K562 (cell line): ENCODE measurements at regions of chr2 and their contacts with region 1.

Region 1: GRCh38 chr2:70994756-70995729 is at the start of gene TEX261:
- DNase-seq: peak; percentile 91 to 92 (median 91)
- ATAC-seq: peak; percentile 98
- H3K4me3 ChIP-seq: peak within 1 kb of the TSS; percentile 87
- H3K27ac ChIP-seq: peak within 1 kb of the TSS; percentile 65
- H3K4me1 ChIP-seq: peaks cover 12 to 22% of the 10 kb centered on the region in 2 experiments; a peak in 4 of 5 replicates
- H3K27me3 ChIP-seq: no peaks in the 10 kb centered on the region
- CTCF ChIP-seq: peak; percentile 61 to 94 (median 87)
- EP300 ChIP-seq: 0 out of 2 replicates have a peak, but pooled peaks have one; percentile 6
- POLR2A ChIP-seq: 0 out of 2 replicates have a peak, but pooled peaks have one; percentile 35
- RAD21 ChIP-seq: peak in 1 of 2 experiments; percentile 28; a peak in 2 of 4 replicates
- polyA plus RNA-seq, gene TEX261: 11.9 to 16.7 TPM

Region 2: GRCh38 chr2:70627211-70627902 is 367.7 kb before region 1 on chr2:
- CTCF ChIA-PET with region 1: no interaction called
- POLR2A ChIA-PET with region 1: no interaction called
- in situ Hi-C with region 1: no loop called
- intact Hi-C with region 1: no loop called
- DNase-seq: peak in 3 of 4 experiments; percentile 23 to 49 (median 30)
- ATAC-seq: peak; percentile 53; the same call in 1 of the 3 replicates
- H3K4me3 ChIP-seq: no peak overlapping the region
- H3K27ac ChIP-seq: no peak overlapping the region
- H3K4me1 ChIP-seq: peaks cover 0 to 5% of the 10 kb centered on the region in 2 experiments; a peak in 3 of 5 replicates
- H3K27me3 ChIP-seq: peaks cover 0 to 6% of the 10 kb centered on the region in 2 experiments; a peak in 3 of 5 replicates
- CTCF ChIP-seq: no peak
- EP300 ChIP-seq: no peak
- POLR2A ChIP-seq: no peak
- RAD21 ChIP-seq: no peak

Region 3: DNA sequence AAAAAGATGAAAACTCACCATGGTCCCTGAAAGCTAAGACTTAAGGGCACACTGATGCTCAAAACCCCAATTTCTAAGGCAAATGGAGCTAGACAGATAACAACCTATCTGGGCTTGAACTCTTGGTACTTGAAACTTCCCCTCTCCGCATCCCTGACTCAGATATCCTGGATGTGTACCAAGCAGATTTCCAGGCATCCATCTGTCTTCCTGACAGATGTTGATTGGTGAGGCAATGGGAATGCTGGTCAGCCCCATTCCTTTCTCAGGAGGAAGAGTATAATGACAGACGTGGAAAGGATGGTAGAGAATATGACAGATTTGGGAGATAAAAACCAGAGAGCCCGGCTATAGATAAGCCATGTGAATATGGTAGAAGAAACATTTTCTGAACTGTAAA is 296.2 kb before region 1 on chr2:
- CTCF ChIA-PET with region 1: no interaction called
- POLR2A ChIA-PET with region 1: no interaction called
- in situ Hi-C with region 1: no loop called
- intact Hi-C with region 1: no loop called
- DNase-seq: no peak
- ATAC-seq: no peak
- H3K4me3 ChIP-seq: no peak overlapping the region
- H3K27ac ChIP-seq: no peak overlapping the region
- H3K4me1 ChIP-seq: peaks cover 7 to 14% of the 10 kb centered on the region in 2 experiments; a peak in 3 of 5 replicates
- H3K27me3 ChIP-seq: no peaks in the 10 kb centered on the region
- CTCF ChIP-seq: no peak
- EP300 ChIP-seq: no peak
- POLR2A ChIP-seq: no peak
- RAD21 ChIP-seq: no peak

Region 4: DNA sequence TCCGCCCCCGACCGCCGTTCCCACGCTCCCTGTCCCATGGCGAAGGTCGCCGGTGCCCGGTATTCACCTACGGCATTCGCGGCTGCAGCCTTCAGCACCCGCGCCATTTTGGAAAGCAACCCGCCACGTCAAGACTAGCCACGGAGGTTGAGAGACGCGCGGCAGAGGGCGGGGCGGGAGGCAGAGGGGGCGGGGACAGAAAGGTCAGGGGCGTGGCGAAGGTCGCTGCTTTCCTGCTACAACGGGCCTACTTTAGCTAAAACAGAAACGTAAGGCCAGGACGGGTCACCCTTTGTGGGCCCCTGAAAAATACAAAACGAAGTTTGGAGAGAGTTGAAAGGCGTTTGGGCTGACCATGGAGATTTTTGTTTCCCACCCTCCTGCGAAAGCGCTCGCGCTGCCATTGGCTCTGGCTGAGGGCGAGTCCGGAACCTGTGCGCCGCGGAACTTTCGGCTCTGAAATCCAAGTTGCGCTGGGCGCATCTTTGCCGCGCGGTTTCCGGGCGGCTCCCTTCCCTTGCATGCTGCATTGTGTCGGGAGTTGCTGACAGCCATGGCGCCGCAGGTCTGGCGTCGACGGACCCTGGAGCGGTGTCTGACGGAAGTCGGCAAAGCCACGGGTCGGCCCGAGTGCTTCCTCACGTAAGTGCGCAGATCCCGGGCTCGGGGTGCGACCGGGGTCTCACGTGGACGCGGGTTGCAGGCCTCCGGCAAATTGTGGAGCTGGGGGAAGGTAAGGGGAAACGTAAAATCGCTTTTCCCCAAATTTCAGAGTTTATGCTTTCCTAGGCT is 135.3 kb after region 1 on chr2 and contains the starts of genes MCEE and MPHOSPH10:
- CTCF ChIA-PET with region 1: no interaction called
- POLR2A ChIA-PET with region 1: no interaction called
- in situ Hi-C with region 1: no loop called
- intact Hi-C with region 1: loop called (anchors 10 kb)
- DNase-seq: peak; percentile 80 to 96 (median 84)
- ATAC-seq: peak; percentile 95
- H3K4me3 ChIP-seq: peak within 1 kb of the TSS; percentile 75
- H3K27ac ChIP-seq: peak within 1 kb of the TSS; percentile 90
- H3K4me1 ChIP-seq: peaks cover 7 to 12% of the 10 kb centered on the region in 2 experiments; a peak in 3 of 5 replicates
- H3K27me3 ChIP-seq: no peaks in the 10 kb centered on the region
- CTCF ChIP-seq: no peak
- EP300 ChIP-seq: peak; percentile 28; the same call in 1 of the 2 replicates
- POLR2A ChIP-seq: peak; percentile 88
- RAD21 ChIP-seq: no peak; a peak in 1 of 4 replicates
- polyA plus RNA-seq, gene MCEE: 43.8 to 49.1 TPM
- polyA plus RNA-seq, gene MPHOSPH10: 36.8 to 56.3 TPM